Posterior vena cava (tissue), 2 donors: ENCODE measurements at regions of chr7 and their contacts with region 1.

Region 1: GRCh38 chr7:153628825-153629224 is 423.4 kb upstream of the DPP6 start:
- DNase-seq: no peak

Region 2: GRCh38 chr7:153005750-153006456 is 622.9 kb before region 1 on chr7:
- intact Hi-C with region 1: no loop called
- DNase-seq: no peak

Region 3: DNA sequence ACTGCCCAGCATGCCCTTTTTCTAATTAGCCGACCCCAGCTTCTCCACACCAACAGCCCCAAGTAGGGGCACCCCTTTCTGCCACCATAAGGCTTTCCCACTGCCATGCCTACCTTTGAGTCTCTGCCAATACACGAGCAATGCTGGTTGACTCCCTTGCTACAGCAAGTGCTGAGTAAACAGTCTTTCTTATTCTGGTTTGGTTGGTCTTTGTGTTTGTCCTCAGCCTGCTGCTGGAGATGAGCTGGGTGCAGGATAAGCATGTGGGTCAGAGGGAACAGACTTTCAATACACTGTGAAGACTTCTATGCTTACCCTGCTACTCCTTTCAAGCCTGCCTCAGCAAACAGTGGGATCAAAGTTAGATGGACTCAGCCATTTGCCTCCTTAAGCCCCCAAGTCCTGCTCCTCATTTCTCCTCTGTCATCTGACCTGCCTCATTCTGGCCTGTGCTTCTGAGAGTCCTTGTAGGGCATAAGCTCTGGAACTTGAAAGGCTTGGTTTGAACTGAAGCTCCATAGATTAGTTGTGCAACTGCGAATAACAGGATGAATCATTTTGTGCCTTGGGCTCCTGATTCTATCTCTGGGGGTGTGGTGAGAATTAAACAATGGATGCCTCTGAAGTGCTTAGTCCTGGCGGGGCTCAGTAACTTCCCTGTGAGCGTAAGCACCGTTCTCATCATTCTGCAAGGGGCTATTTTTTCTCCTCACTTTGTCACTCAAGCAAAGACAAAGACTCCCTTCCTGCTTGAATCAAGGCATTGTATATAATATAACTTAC is 110.4 kb before region 1 on chr7:
- intact Hi-C with region 1: no loop called
- DNase-seq: no peak

Region 4: DNA sequence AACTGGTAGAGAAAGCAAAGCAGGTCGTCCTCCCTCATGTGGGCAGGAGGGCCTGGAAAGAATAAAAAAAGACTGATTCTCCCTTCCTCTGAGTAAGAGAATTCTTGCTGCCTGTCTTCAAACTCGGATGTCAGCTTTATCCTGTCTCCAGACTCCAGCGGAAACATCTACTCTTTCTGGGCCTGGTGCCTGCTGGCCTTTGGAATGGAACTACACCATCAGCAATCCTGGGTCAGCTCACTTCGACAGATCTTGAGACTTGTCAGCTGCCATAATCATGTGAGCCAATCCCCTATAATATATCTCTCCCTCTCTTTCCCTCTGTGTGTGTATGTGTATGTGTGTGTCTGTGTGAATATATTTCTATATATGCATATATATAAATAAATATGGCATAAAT is 12.4 kb after region 1 on chr7:
- intact Hi-C with region 1: no loop called
- DNase-seq: peak; percentile 83

Region 5: DNA sequence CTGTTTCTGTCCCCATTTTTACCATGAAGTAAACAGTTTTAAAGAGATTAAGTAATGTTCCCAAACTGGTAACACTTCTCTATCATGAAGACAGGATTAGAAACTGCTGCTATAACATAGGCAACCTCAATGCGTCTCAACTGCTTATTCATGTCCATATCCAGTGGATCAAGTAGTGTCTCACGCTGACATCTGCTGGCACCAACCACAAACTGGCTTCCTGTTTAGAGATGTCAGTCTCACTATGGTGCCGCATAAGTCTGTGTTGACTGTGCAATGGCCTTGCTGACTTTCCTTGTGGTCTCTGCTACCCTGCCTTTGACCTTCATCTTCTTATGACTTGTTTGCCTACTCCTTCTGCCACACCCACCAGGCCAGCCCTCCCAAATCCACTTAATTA is 53.8 kb after region 1 on chr7:
- intact Hi-C with region 1: loop called in 1 of 2 experiments (anchors 10 kb)
- DNase-seq: no peak

Region 6: DNA sequence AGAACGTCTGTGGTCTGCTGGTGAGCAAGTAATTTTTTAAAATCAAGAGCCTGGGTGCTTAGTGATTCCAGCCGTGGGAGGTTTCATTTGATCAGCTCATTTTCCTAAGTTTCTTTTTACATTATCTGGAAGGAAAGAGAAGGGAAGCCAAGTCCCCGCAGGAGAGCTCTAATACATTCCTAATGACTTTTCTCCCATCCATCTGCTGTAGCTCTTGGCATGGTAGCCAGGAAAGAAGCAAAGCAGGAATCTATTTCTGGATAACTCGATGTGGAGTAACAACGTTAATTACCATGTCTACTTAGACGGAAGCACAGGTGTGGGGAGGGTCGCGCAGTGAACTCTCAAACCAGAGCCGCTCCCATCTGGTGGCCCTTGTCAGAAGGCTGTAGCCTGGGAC is 1252.2 kb after region 1 on chr7:
- intact Hi-C with region 1: no loop called
- DNase-seq: no peak